ENCODE measurements at regions of chr6 and their contacts with region 1.

Region 1: GRCh38 chr6:5143634-5144311 is 58.6 kb downstream of the PPP1R3G start:
- DNase-seq: peak; percentile 63
- H3K4me3 ChIP-seq: no peak overlapping the region
- H3K27ac ChIP-seq: no peak overlapping the region
- H3K27me3 ChIP-seq: no peaks in the 10 kb centered on the region
- CTCF ChIP-seq: peak; percentile 94

Region 2: DNA sequence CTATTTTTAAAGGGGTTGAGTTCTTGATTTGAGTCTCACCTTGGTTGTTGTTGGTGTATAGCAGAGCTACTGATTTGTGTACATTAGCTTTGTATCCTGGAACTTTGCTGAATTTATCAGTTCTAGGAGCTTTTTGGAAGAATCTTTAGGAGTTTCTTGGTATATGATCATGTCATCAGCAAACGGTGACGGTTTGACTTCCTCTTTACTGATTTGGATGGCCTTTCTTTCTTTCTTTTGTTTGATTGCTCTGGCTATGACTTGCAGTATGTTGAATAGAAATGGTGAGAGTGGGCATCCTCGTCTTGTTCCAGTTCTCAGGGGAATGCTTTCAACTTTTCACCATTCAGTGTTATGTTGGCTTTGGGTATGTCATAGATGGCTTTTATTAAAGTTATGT is 303.6 kb before region 1 on chr6:
- CTCF ChIA-PET with region 1: no interaction called
- POLR2A ChIA-PET with region 1: no interaction called
- DNase-seq: no peak
- H3K4me3 ChIP-seq: no peak overlapping the region
- H3K27ac ChIP-seq: no peak overlapping the region
- H3K27me3 ChIP-seq: no peaks in the 10 kb centered on the region
- CTCF ChIP-seq: no peak

Region 3: DNA sequence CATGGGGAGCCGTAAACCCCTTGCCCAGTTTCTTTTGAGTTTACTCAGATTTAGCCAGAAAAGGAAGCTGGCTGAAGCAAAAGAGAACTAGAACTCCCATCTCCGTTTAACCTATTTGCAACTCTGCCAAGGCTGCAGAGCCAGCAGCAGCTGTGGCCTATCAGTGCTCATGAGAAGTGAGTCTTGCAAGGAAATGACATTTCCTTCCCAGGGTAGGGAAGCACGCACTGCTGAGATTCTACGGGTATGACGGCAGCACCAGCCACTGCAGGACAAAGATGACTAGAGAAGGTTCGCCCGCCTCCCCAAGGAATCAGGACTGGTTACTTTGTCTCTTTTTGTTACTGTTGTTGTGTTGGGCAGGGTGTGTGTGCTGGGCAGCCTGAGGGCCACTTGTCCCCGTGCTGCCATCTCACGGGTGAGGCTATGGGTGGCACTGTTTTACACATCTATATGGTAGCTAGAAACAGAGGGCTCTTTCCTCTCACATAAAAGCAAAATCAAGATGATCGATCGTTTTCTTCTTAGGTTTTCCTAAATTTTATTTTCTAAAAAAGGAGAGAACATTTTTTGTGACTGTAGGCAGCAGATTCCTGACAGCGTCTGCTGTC is 10.9 kb before region 1 on chr6:
- CTCF ChIA-PET with region 1: interaction called, 13 read pairs
- POLR2A ChIA-PET with region 1: no interaction called
- DNase-seq: peak; percentile 91
- H3K4me3 ChIP-seq: peak overlapping the region; percentile 34
- H3K27ac ChIP-seq: peak overlapping the region; percentile 83
- H3K27me3 ChIP-seq: no peaks in the 10 kb centered on the region
- CTCF ChIP-seq: no peak

Region 4: DNA sequence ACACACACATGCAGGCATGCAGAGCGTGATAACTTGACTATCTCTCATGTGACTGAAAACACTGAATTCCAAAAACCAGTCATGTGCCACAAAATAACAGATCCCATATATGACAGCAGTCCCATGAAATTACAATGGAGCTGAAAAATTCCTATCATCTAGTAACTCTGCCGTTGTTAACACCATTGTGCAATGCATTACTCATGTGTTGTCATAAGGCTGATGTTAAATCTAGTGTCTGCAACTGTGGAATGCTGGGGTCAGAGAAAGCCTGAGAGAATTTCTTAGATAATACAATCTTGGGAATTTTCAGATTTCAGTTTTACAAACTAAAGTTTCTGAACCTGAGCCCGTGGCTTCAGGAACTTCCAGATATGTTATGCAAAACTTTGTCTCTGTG is 46.7 kb after region 1 on chr6:
- CTCF ChIA-PET with region 1: interaction called, 13 read pairs
- POLR2A ChIA-PET with region 1: no interaction called
- DNase-seq: peak; percentile 83
- H3K4me3 ChIP-seq: no peak overlapping the region
- H3K27ac ChIP-seq: no peak overlapping the region
- H3K27me3 ChIP-seq: no peaks in the 10 kb centered on the region
- CTCF ChIP-seq: no peak

Region 5: GRCh38 chr6:5260661-5261544 is 117.1 kb after region 1 on chr6 and contains the starts of genes FARS2 and LYRM4:
- CTCF ChIA-PET with region 1: interaction called, 14 read pairs
- POLR2A ChIA-PET with region 1: interaction called, 8 read pairs
- DNase-seq: peak; percentile 44
- H3K4me3 ChIP-seq: peak within 1 kb of the TSS; percentile 92
- H3K27ac ChIP-seq: peak within 1 kb of the TSS; percentile 93
- H3K27me3 ChIP-seq: no peaks in the 10 kb centered on the region
- CTCF ChIP-seq: peak; percentile 63
- polyA plus RNA-seq, gene FARS2: 14.0 and 14.8 TPM in 2 replicates
- polyA plus RNA-seq, gene LYRM4: 38.9 and 41.4 TPM in 2 replicates

Region 6: GRCh38 chr6:5395719-5396118 is 251.9 kb after region 1 on chr6:
- CTCF ChIA-PET with region 1: interaction called, 27 read pairs
- POLR2A ChIA-PET with region 1: no interaction called
- DNase-seq: no peak
- H3K4me3 ChIP-seq: no peak overlapping the region
- H3K27ac ChIP-seq: no peak overlapping the region
- H3K27me3 ChIP-seq: no peaks in the 10 kb centered on the region
- CTCF ChIP-seq: 0 out of 2 replicates have a peak, but pooled peaks have one; percentile 1

Region 7: DNA sequence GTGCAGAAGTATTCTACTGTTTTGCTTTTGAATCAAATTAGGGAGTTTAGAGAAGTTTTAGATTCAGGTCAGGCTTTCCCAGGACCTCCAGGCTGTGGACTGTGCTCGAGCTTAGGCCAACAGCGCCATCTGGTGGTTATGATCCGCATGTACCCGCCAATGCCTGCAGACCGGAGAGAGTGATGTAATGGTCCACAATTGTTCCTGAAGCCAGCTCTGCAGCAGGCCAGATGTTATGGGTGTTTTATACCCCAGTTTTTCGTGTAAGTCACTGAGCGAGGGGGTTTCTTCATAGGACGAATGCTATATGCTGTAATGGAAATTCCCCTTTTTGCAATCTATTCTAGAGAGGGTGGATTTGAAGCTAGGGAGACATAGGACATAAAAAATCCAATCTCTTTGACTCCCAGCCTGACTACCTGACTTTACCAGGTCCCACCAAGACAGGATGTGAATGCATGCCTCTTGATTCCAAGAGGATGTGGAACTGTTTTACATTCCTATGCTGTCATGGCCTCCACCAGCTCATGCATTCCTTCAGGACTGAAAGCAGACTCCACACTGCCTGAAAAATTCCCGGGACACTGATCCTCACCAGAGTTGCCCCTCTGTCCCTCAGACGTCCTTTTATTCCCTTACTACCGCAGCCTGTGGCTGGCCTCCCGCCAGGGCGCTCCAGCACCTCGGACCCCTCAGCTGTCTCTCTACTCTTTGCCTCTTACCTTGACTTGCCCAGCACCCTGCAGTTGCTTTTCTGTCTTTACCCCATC is 1403.5 kb after region 1 on chr6:
- CTCF ChIA-PET with region 1: interaction called, 19 read pairs
- POLR2A ChIA-PET with region 1: no interaction called
- DNase-seq: peak; percentile 47
- H3K4me3 ChIP-seq: peak overlapping the region; percentile 34
- H3K27ac ChIP-seq: no peak overlapping the region
- H3K27me3 ChIP-seq: peaks cover 6% of the 10 kb centered on the region
- CTCF ChIP-seq: peak; percentile 88